ENCODE measurements at regions of chr11 and their contacts with region 1.

Region 1: DNA sequence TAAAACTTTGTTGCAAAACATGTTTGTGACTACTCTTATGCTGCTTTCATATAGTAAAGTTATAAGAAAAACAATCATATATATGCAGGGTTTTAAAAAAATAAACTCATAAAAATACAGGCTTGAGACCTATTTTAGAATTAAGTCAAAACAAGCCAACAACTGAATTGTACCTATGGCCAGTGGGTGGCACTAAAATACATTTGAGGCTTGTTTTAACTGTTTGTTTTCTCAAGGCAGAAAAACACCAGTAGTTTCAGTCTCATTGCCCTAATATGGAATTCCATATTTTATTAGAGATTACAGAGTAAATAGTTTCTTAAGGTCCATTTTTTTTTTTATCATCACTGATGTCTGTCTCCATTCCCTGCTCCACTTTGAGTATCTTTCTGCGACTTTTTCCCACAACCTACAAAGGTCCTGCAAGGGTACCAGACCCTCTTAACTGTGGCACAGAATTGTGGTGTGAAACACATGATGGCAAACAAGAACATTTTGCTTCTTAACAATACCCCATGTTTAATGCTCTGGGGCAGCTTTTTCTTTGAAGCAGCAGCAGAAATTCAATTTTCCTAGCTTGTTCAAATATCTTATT is 8.5 kb upstream of the CCDC89 start:
- DNase-seq: peak; percentile 45
- H3K4me3 Mint-ChIP-seq: no peak overlapping the region
- H3K27ac Mint-ChIP-seq: no peak overlapping the region
- H3K4me1 Mint-ChIP-seq: no peaks in the 10 kb centered on the region
- H3K27me3 Mint-ChIP-seq: peaks cover 16% of the 10 kb centered on the region
- CTCF ChIP-seq: peak; percentile 45

Region 2: DNA sequence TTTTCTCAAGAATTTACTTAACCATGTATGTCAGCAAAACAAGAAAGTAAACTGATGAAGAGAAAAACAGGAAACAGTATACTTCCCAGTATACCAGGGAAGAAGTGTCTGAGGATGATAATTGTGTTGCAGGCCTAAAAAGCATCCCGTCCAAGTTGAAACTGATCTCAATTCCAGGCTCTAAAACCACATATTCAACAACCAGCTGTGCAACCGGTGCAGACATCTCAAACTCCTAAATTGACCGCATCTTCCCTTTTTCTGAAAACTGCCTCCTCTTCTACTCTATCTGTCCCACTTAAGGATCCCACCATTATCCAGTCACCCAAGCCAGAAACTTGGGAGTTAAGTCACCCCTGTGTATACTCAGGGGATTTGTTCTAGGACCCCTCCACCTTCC is 207.9 kb after region 1 on chr11:
- CTCF ChIA-PET with region 1: no interaction called
- POLR2A ChIA-PET with region 1: no interaction called
- intact Hi-C with region 1: no loop called
- DNase-seq: no peak
- H3K4me3 Mint-ChIP-seq: no peak overlapping the region
- H3K27ac Mint-ChIP-seq: no peak overlapping the region
- H3K4me1 Mint-ChIP-seq: no peaks in the 10 kb centered on the region
- H3K27me3 Mint-ChIP-seq: no peaks in the 10 kb centered on the region
- CTCF ChIP-seq: no peak

Region 3: DNA sequence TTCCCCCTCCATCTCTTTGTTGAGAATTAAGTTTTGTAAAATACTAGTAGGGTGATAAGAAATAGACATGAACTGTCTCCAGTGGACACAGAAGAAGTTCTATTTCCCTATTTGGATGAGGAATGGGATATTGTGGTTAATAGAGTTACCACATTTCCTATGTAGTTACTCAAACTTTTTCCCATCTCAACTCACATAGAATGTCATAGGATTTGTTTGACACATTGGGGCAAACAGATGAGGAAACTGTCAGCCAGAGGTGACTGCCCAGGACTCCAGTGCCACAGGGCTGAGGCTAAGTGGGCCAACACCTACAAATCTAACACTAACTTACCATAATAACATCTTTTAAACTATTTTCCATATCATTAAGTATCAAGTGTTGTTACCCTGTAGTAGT is 219.0 kb after region 1 on chr11:
- CTCF ChIA-PET with region 1: no interaction called
- POLR2A ChIA-PET with region 1: no interaction called
- intact Hi-C with region 1: no loop called
- DNase-seq: no peak
- H3K4me3 Mint-ChIP-seq: no peak overlapping the region
- H3K27ac Mint-ChIP-seq: no peak overlapping the region
- H3K4me1 Mint-ChIP-seq: no peaks in the 10 kb centered on the region
- H3K27me3 Mint-ChIP-seq: no peaks in the 10 kb centered on the region
- CTCF ChIP-seq: no peak

Region 4: DNA sequence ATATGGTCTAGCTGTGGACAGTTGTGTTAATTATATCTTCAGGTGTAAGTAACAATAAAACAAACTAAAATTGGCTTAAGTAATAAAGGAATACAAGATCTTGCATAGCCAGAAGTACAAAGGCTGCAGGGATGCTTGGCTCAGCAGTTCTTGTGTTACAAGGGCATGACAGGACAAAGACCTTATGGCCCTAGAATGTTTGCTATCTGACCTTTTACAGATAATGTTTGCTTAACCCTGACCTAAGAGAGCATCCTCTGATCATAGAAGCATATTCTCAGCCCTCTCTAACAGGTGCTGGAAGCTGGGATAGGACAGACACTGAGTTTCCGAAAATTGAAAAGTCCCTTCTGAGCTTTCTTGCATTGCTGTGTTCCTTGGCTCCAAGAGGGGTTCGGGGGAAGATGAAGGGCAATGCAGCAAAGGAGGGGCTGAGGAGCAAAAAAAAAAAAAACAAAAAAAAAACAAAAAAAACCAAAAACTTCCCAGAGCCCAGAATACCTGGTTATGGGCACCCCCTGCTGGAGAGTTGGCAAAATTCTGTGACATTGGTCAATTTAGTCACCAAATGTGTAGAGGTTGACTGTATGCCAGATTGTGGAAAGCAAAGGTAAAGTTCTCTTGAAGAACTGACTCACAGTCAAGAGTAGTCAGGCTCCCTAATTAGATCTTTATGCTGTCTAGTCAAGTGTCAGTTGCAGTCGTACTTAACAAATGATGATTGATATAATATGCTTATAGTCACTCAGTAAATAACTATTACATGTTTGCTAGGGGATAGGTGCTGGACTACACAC is 597.2 kb after region 1 on chr11:
- CTCF ChIA-PET with region 1: no interaction called
- POLR2A ChIA-PET with region 1: no interaction called
- intact Hi-C with region 1: loop called (anchors 5 kb)
- DNase-seq: peak; percentile 77
- H3K4me3 Mint-ChIP-seq: no peak overlapping the region
- H3K27ac Mint-ChIP-seq: no peak overlapping the region
- H3K4me1 Mint-ChIP-seq: peaks cover 6% of the 10 kb centered on the region
- H3K27me3 Mint-ChIP-seq: no peaks in the 10 kb centered on the region
- CTCF ChIP-seq: peak; percentile 78